Activated CD8-positive, alpha-beta T cell treated with anti-CD3 and anti-CD28 coated beads for 36 hours (primary cell): ENCODE measurements at regions of chr4 and their contacts with region 1.

Region 1: GRCh38 chr4:151099229-151099975 is at the start of gene RPS3A:
- DNase-seq: peak; percentile 99
- ATAC-seq: peak; percentile 95
- H3K4me3 Mint-ChIP-seq: peak within 1 kb of the TSS; percentile 99
- H3K27ac Mint-ChIP-seq: peak within 1 kb of the TSS; percentile 99
- H3K4me1 Mint-ChIP-seq: peaks cover 27% of the 10 kb centered on the region
- H3K27me3 Mint-ChIP-seq: peaks cover 6% of the 10 kb centered on the region
- CTCF ChIP-seq: peak; percentile 85
- total RNA-seq, gene RPS3A: 3,072 to 3,095 TPM

Region 2: GRCh38 chr4:151015459-151016347 is 83.7 kb before region 1 on chr4:
- CTCF ChIA-PET with region 1: interaction called, 3 read pairs
- POLR2A ChIA-PET with region 1: interaction called, 22 read pairs
- intact Hi-C with region 1: loop called (anchors 2 kb)
- DNase-seq: peak; percentile 83
- ATAC-seq: peak; percentile 84
- H3K4me3 Mint-ChIP-seq: peak overlapping the region; percentile 95
- H3K27ac Mint-ChIP-seq: peak overlapping the region; percentile 99
- H3K4me1 Mint-ChIP-seq: peaks cover 18% of the 10 kb centered on the region
- H3K27me3 Mint-ChIP-seq: no peaks in the 10 kb centered on the region
- CTCF ChIP-seq: no peak

Region 3: GRCh38 chr4:151031831-151032605 is 67.4 kb before region 1 on chr4:
- CTCF ChIA-PET with region 1: no interaction called
- POLR2A ChIA-PET with region 1: interaction called, 15 read pairs
- intact Hi-C with region 1: no loop called
- DNase-seq: peak; percentile 34
- ATAC-seq: peak; percentile 65
- H3K4me3 Mint-ChIP-seq: peak overlapping the region; percentile 70
- H3K27ac Mint-ChIP-seq: peak overlapping the region; percentile 93
- H3K4me1 Mint-ChIP-seq: peaks cover 29% of the 10 kb centered on the region
- H3K27me3 Mint-ChIP-seq: peaks cover 5% of the 10 kb centered on the region
- CTCF ChIP-seq: no peak

Region 4: DNA sequence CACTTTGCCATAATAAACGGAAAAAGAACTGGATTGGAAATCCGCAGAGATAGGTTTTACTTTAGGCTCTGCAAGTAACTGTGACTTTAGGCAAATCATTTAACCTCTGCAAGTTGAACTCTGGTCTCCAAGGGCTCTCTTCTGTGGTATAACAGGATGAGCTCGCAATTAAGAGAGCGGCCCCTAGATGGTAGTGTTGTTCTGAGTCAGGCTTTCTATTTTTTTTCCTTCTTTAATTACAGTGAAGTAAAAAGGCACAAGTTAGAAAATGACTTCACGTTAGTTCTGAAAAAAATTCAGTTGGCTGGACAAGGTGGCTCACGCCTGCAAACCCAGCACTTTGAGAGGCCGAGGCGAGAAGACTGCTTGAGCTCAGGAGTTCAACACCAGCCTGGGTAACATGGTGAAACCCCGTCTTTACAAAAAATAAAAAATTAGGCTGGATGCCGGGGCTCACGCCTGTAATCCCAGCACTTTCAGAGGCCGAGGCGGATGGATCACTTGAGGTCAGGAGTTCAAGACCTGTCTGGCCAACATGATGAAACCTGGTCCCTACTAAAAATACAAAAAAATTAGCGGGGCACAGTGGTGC is 18.1 kb after region 1 on chr4:
- CTCF ChIA-PET with region 1: interaction called, 23 read pairs
- POLR2A ChIA-PET with region 1: interaction called, 22 read pairs
- intact Hi-C with region 1: no loop called
- DNase-seq: peak; percentile 73
- ATAC-seq: peak; percentile 79
- H3K4me3 Mint-ChIP-seq: no peak overlapping the region
- H3K27ac Mint-ChIP-seq: no peak overlapping the region
- H3K4me1 Mint-ChIP-seq: peaks cover 5% of the 10 kb centered on the region
- H3K27me3 Mint-ChIP-seq: no peaks in the 10 kb centered on the region
- CTCF ChIP-seq: peak; percentile 74